Endothelial cell of umbilical vein (primary cell): ENCODE measurements at regions of chr3 and their contacts with region 1.

Region 1: DNA sequence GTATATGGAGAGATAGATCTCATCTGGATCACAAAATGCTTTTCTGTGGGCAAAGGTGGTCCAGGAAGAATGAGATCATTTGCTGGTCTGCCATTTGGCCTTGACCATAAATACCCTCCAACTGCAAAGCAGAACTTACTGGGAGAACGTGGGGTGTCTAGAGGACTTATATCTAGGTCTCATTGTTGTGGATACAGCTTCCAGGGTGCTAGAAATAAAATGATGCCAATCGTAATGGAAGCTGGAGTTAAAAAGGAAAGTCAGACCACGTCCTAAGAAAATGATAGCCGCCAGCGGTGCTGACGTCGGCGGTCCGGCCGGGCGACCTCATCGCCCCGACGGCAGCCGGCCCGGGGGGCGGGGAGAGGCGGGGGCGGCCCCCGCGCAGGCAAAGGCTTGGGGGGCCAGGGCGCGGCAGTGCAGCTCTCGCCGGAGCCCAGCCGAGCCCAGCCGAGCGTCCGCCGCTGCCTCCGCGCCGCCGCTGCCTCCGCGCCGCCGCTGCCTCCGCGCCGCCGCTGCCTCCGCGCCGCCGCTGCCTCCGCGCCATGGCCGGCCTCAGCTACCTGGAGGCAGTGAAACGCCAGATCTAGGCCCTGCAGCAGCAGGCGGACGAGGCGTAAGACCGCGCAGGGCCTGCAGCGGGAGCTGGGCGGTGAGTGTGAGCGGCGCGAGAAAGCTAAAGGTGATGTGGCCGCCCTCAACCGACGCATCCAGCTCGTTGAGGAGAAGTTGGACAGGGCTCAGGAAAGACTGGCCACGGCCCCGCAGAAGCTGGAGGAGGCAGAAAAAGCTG is 89.5 kb downstream of the EOMES start:
- DNase-seq: peak; percentile 66
- H3K4me3 ChIP-seq: peak overlapping the region; percentile 32 to 59 (median 42)
- H3K27ac ChIP-seq: peak overlapping the region; percentile 80
- H3K4me1 ChIP-seq: peaks cover 34% of the 10 kb centered on the region
- H3K27me3 ChIP-seq: no peaks in the 10 kb centered on the region
- CTCF ChIP-seq: no peak
- POLR2A ChIP-seq: no peak

Region 2: GRCh38 chr3:27521179-27521871 is 111.3 kb before region 1 on chr3:
- CTCF ChIA-PET with region 1: no interaction called
- POLR2A ChIA-PET with region 1: no interaction called
- dilution Hi-C with region 1: no loop called
- intact Hi-C with region 1: loop called (anchors 1 kb)
- DNase-seq: peak; percentile 49
- H3K4me3 ChIP-seq: no peak overlapping the region
- H3K27ac ChIP-seq: no peak overlapping the region
- H3K4me1 ChIP-seq: peaks cover 8% of the 10 kb centered on the region
- H3K27me3 ChIP-seq: no peaks in the 10 kb centered on the region
- CTCF ChIP-seq: no peak
- POLR2A ChIP-seq: no peak

Region 3: GRCh38 chr3:27559835-27560234 is 72.8 kb before region 1 on chr3:
- CTCF ChIA-PET with region 1: no interaction called
- POLR2A ChIA-PET with region 1: interaction called, 4 read pairs
- dilution Hi-C with region 1: no loop called
- intact Hi-C with region 1: loop called (anchors 2 kb)
- DNase-seq: peak; percentile 99
- H3K4me3 ChIP-seq: no peak overlapping the region
- H3K27ac ChIP-seq: peak overlapping the region; percentile 85
- H3K4me1 ChIP-seq: peaks cover 18% of the 10 kb centered on the region
- H3K27me3 ChIP-seq: no peaks in the 10 kb centered on the region
- CTCF ChIP-seq: no peak
- POLR2A ChIP-seq: peak; percentile 27

Region 4: DNA sequence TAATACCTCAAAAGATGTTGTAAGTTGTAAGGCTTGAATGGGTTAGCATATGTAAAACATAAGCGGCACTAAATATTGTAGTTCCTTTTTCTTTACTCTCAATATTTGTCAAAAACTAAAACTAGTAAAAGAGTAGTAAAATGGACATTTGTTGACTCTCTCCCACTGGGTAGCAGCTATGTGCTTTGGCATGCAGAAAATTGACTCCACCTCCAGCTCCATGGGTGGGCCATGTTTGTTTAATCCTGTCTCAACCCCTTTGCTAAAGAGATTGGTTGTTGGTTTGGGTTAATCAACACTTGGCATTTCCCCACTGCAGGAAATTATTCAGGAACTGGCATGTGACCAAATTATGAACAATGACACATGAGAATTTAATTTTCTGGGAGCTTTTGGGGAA is 25.3 kb before region 1 on chr3:
- CTCF ChIA-PET with region 1: no interaction called
- POLR2A ChIA-PET with region 1: no interaction called
- dilution Hi-C with region 1: no loop called
- intact Hi-C with region 1: loop called (anchors 2 kb)
- DNase-seq: peak; percentile 84
- H3K4me3 ChIP-seq: no peak overlapping the region
- H3K27ac ChIP-seq: peak overlapping the region; percentile 54
- H3K4me1 ChIP-seq: peaks cover 16% of the 10 kb centered on the region
- H3K27me3 ChIP-seq: no peaks in the 10 kb centered on the region
- CTCF ChIP-seq: no peak
- POLR2A ChIP-seq: no peak

Region 5: DNA sequence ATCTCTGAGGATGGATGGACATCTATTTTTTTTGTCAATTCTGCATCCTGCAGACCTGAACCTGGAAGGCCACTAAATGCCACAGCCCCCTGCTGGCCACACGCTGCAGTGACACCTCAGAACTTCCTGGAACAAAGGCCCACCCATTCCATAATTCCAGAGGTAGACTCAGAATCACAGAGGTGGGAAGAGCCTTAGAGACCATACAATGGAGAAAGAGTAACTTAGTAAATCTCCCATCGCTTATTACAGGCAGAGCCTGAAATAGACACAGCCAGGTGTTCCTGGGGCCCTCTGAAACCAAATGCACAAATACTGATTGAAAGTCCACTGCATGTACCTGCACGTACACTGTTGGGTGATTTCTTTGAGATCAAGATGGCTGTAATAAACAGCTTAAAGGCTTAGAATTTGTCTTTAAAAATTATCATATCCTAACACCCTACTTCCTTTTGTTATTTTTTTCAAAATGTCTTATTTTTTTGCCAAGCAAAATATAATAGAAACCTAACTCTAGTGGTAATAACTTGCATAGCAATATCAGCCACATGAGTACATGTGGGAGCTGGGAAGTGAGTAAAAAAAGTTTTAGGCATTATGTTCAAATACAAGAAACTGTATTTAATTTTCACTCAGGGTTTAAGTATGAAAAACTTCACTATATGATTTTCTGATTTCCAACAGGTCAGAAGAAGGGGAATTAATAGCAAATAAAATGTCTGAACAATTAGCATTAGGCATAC is 26.8 kb after region 1 on chr3:
- CTCF ChIA-PET with region 1: interaction called, 6 read pairs
- POLR2A ChIA-PET with region 1: no interaction called
- dilution Hi-C with region 1: no loop called
- intact Hi-C with region 1: loop called (anchors 1 kb)
- DNase-seq: peak; percentile 55
- H3K4me3 ChIP-seq: no peak overlapping the region
- H3K27ac ChIP-seq: no peak overlapping the region
- H3K4me1 ChIP-seq: peaks cover 13% of the 10 kb centered on the region
- H3K27me3 ChIP-seq: no peaks in the 10 kb centered on the region
- CTCF ChIP-seq: peak; percentile 74 to 91
- POLR2A ChIP-seq: no peak